GM12878 (cell line): ENCODE measurements at regions of chr3 and their contacts with region 1.

Region 1: GRCh38 chr3:98556164-98557130 is 24.7 kb downstream of the GPR15 start:
- DNase-seq: peak; percentile 99
- ATAC-seq: peak; percentile 55
- H3K4me3 ChIP-seq: peak overlapping the region; percentile 58
- H3K27ac ChIP-seq: peak overlapping the region; percentile 100
- H3K4me1 ChIP-seq: peaks cover 20% of the 10 kb centered on the region
- H3K27me3 ChIP-seq: no peaks in the 10 kb centered on the region
- CTCF ChIP-seq: no peak
- EP300 ChIP-seq: peak; percentile 100
- POLR2A ChIP-seq: peak; percentile 49; the same call in 1 of the 2 replicates
- RAD21 ChIP-seq: peak; percentile 35; the same call in 1 of the 2 replicates

Region 2: DNA sequence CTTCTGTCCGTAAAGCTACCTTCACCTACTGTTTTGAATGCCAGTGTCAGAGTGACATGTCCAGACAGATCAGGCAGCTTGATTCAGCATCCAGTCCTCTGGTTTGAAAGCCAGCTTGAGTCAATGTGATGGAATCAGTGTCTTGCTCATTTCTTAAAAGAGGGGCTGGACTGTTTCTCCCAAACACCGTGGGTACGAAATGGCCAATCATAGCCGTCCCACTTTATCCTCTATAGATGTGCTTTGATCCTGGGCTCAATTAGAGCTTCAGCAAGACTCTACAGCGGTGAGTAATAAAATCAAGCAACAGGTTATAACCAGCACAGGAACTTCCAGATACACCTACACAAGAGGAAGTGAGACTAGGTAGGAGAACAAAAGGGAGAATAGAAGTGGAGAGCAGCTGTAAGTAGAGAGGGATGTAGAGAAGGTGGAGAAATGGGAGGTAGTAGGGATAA is 110.5 kb before region 1 on chr3:
- CTCF ChIA-PET with region 1: no interaction called
- POLR2A ChIA-PET with region 1: no interaction called
- RAD21 ChIA-PET with region 1: no interaction called
- SMC1A ChIA-PET with region 1: no interaction called
- in situ Hi-C with region 1: no loop called
- intact Hi-C with region 1: no loop called
- DNase-seq: peak; percentile 48
- ATAC-seq: peak; percentile 87
- H3K4me3 ChIP-seq: no peak overlapping the region
- H3K27ac ChIP-seq: peak overlapping the region; percentile 71
- H3K4me1 ChIP-seq: peaks cover 14% of the 10 kb centered on the region; the same call in 1 of the 2 replicates
- H3K27me3 ChIP-seq: no peaks in the 10 kb centered on the region
- CTCF ChIP-seq: no peak
- EP300 ChIP-seq: peak in 1 of 2 experiments; percentile 70; a peak in 2 of 4 replicates
- POLR2A ChIP-seq: no peak
- RAD21 ChIP-seq: no peak

Region 3: GRCh38 chr3:98522244-98523090 is 34.0 kb before region 1 on chr3 and contains the start of gene CLDND1:
- CTCF ChIA-PET with region 1: interaction called, 11 read pairs
- POLR2A ChIA-PET with region 1: interaction called, 9 read pairs
- RAD21 ChIA-PET with region 1: interaction called, 18 read pairs
- SMC1A ChIA-PET with region 1: interaction called, 37 read pairs
- in situ Hi-C with region 1: loop called (anchors 5 kb)
- intact Hi-C with region 1: no loop called
- DNase-seq: peak; percentile 88
- ATAC-seq: peak; percentile 86
- H3K4me3 ChIP-seq: peak within 1 kb of the TSS; percentile 82
- H3K27ac ChIP-seq: peak within 1 kb of the TSS; percentile 85
- H3K4me1 ChIP-seq: peaks cover 13% of the 10 kb centered on the region; the same call in 1 of the 2 replicates
- H3K27me3 ChIP-seq: no peaks in the 10 kb centered on the region
- CTCF ChIP-seq: no peak
- EP300 ChIP-seq: no peak
- POLR2A ChIP-seq: peak; percentile 94
- RAD21 ChIP-seq: no peak
- polyA plus RNA-seq, gene CLDND1: 150 to 163 TPM

Region 4: GRCh38 chr3:98540346-98540745 is 16.1 kb before region 1 on chr3:
- CTCF ChIA-PET with region 1: interaction called, 32 read pairs
- POLR2A ChIA-PET with region 1: interaction called, 350 read pairs
- RAD21 ChIA-PET with region 1: interaction called, 511 read pairs
- SMC1A ChIA-PET with region 1: interaction called, 603 read pairs
- in situ Hi-C with region 1: no loop called
- intact Hi-C with region 1: loop called (anchors 1 kb)
- DNase-seq: peak; percentile 92
- ATAC-seq: peak; percentile 39
- H3K4me3 ChIP-seq: peak overlapping the region; percentile 42; the same call in 1 of the 2 replicates
- H3K27ac ChIP-seq: peak overlapping the region; percentile 51
- H3K4me1 ChIP-seq: peaks cover 32% of the 10 kb centered on the region; the same call in 1 of the 2 replicates
- H3K27me3 ChIP-seq: no peaks in the 10 kb centered on the region
- CTCF ChIP-seq: no peak
- EP300 ChIP-seq: peak; percentile 74 to 92; a peak in 3 of 4 replicates
- POLR2A ChIP-seq: no peak
- RAD21 ChIP-seq: no peak

Region 5: DNA sequence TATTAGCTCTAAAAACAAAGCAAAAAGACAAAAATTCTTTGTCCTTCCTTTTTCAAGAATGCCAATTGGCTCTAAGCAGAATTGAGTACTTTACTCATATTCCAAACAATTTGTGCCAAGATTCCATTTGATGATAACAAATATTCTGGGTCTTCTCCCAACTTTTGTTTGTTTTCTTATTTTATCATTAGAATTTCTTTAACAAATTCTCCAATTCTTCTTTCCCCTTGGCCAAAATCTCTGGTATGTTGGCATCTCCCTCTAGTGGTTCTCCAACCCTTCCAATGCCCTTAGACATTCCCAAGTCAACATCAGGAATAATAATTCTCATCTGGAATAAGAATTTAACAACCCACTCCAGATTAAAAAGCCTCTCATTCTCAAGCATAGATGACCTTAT is 31.6 kb after region 1 on chr3:
- CTCF ChIA-PET with region 1: no interaction called
- POLR2A ChIA-PET with region 1: interaction called, 4 read pairs
- RAD21 ChIA-PET with region 1: interaction called, 4 read pairs
- SMC1A ChIA-PET with region 1: interaction called, 13 read pairs
- in situ Hi-C with region 1: no loop called
- intact Hi-C with region 1: loop called (anchors 2 kb)
- DNase-seq: no peak
- ATAC-seq: no peak
- H3K4me3 ChIP-seq: no peak overlapping the region
- H3K27ac ChIP-seq: no peak overlapping the region
- H3K4me1 ChIP-seq: no peaks in the 10 kb centered on the region
- H3K27me3 ChIP-seq: no peaks in the 10 kb centered on the region
- CTCF ChIP-seq: peak in 1 of 3 experiments; percentile 18; a peak in 2 of 6 replicates
- EP300 ChIP-seq: no peak
- POLR2A ChIP-seq: no peak
- RAD21 ChIP-seq: no peak